GM12878 (cell line): ENCODE measurements at regions of chr6 and their contacts with region 1.

Region 1: GRCh38 chr6:11277275-11278206 is 45.1 kb upstream of the NEDD9 start:
- DNase-seq: peak; percentile 94
- ATAC-seq: peak; percentile 78
- H3K4me3 ChIP-seq: peak overlapping the region; percentile 23; the same call in 1 of the 2 replicates
- H3K27ac ChIP-seq: peak overlapping the region; percentile 95
- H3K4me1 ChIP-seq: peaks cover 46% of the 10 kb centered on the region
- H3K27me3 ChIP-seq: no peaks in the 10 kb centered on the region
- CTCF ChIP-seq: no peak
- EP300 ChIP-seq: peak; percentile 65 to 83; a peak in 2 of 4 replicates
- POLR2A ChIP-seq: peak; percentile 55
- RAD21 ChIP-seq: peak; percentile 12; the same call in 1 of the 2 replicates

Region 2: DNA sequence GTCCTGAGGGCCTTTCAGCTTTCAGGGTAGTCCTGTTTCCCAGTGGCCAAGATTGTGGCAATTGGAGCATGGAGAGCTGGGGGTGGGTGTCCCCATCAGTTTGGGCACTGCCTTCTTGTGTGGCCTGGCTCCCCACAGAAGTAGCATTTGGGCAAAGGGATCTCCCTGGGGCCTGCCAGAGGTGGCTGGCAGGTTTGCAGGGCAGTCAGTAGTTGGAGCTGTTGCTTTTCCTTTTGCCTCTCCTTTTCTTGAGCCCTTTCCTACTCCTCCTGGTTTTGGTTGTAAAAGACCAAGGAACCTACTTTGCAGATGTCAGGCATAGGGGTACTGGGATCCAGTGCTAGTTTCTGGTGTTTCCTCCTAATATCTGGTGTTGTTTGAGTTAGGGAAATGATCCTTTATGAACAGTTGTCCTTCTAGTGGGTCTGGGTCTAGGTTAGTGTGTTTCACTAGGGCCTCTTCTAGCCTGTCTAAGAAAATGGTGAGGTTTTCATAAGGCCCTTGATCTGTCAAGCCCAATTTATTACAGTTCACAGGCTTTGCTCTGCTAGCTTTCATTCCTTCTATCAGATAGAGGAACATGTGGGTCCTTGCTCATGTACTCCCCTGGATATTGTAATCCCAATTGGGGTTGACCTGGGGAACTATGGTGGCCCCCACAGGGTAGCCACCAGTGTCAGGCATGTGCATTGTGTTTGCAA is 169.0 kb before region 1 on chr6:
- CTCF ChIA-PET with region 1: no interaction called
- POLR2A ChIA-PET with region 1: no interaction called
- RAD21 ChIA-PET with region 1: no interaction called
- SMC1A ChIA-PET with region 1: no interaction called
- in situ Hi-C with region 1: no loop called
- intact Hi-C with region 1: no loop called
- DNase-seq: no peak
- ATAC-seq: 0 out of 3 replicates have a peak, but pooled peaks have one; percentile 22
- H3K4me3 ChIP-seq: no peak overlapping the region
- H3K27ac ChIP-seq: no peak overlapping the region
- H3K4me1 ChIP-seq: no peaks in the 10 kb centered on the region
- H3K27me3 ChIP-seq: no peaks in the 10 kb centered on the region
- CTCF ChIP-seq: 0 out of 6 replicates have a peak, but pooled peaks of 1 of the 3 experiments have one; percentile 1
- EP300 ChIP-seq: no peak
- POLR2A ChIP-seq: no peak
- RAD21 ChIP-seq: no peak

Region 3: DNA sequence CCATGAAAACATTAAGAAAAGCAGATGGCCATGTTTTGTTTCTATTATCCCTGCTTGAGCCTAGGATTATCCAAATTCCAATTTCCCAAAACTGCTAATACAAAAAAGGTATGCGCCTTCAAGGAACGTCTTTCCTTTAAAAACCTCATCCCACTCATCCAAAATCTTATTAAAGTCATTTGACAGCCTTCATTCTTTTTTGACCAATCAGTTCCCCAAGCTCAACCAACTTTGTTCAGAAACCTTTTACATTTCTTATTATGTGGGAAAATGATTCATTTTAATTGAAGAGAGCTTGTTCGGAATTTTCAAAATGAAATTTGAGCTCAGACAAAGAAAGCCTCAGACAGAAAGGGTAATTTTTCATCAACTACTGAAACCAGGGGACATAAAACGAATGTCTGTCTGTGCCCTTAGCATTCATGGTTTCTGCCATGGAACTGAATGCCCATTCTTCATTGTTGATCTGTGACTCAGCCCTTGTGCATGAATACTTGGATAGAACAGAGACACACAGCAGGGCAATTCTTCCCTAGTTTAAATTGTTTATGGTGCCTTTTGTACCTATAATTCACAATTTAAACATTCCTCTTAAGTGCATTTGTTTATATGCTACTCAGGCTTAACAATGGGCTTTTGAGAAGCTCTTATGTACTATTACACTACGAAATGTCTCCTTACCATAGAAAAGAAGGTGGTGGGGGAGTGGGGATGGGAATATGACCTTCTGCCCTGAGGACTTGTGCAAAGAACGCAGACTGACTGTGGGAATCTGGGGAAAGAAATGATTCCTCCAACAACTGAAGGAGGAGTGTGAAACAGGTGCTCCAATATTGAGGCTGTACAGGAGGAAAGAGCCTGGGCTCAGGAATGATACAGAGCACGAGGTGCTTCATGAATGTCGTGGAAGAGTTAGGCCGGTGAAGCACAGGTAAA is 116.2 kb before region 1 on chr6:
- CTCF ChIA-PET with region 1: no interaction called
- POLR2A ChIA-PET with region 1: no interaction called
- RAD21 ChIA-PET with region 1: no interaction called
- SMC1A ChIA-PET with region 1: no interaction called
- in situ Hi-C with region 1: no loop called
- intact Hi-C with region 1: no loop called
- DNase-seq: no peak
- ATAC-seq: no peak
- H3K4me3 ChIP-seq: no peak overlapping the region
- H3K27ac ChIP-seq: no peak overlapping the region
- H3K4me1 ChIP-seq: peaks cover 6% of the 10 kb centered on the region; the same call in 1 of the 2 replicates
- H3K27me3 ChIP-seq: no peaks in the 10 kb centered on the region
- CTCF ChIP-seq: no peak
- EP300 ChIP-seq: no peak
- POLR2A ChIP-seq: no peak
- RAD21 ChIP-seq: no peak

Region 4: DNA sequence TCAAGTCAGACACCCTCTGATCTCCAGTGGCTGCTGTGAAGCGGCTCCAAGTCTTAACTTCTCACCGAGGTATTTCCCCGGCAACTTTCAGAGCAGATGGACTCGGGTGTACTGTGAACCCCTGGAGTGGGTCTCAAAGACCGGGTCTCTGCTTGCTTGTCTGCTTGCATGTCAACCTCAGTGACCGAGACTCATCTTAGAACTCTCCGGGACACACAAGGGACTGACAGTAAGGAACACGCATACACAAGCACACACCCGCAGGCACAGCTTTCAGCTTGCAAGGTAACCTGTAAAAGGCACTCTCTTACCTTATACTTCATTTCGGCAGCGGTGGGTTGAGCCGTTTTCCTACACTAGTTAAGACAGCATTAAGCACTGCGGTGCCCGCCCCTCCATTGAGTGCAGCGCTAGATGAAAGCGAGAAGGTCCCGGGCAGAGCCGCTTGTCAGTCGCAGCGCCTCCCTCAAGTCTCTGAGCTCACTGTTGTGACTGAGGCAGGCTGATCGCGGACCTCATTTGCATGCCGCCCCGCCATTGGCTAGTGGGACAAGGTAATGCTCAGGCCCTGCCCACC is 45.3 kb before region 1 on chr6 and contains the start of gene NEDD9:
- CTCF ChIA-PET with region 1: interaction called, 10 read pairs
- POLR2A ChIA-PET with region 1: interaction called, 67 read pairs
- RAD21 ChIA-PET with region 1: interaction called, 62 read pairs
- SMC1A ChIA-PET with region 1: interaction called, 99 read pairs
- in situ Hi-C with region 1: no loop called
- intact Hi-C with region 1: loop called (anchors 1 kb)
- DNase-seq: peak; percentile 86
- ATAC-seq: peak; percentile 98
- H3K4me3 ChIP-seq: peak within 1 kb of the TSS; percentile 84
- H3K27ac ChIP-seq: peak within 1 kb of the TSS; percentile 66
- H3K4me1 ChIP-seq: peaks cover 10% of the 10 kb centered on the region; the same call in 1 of the 2 replicates
- H3K27me3 ChIP-seq: no peaks in the 10 kb centered on the region
- CTCF ChIP-seq: no peak
- EP300 ChIP-seq: no peak
- POLR2A ChIP-seq: peak; percentile 96
- RAD21 ChIP-seq: no peak
- polyA plus RNA-seq, gene NEDD9: 4.9 to 6.3 TPM

Region 5: DNA sequence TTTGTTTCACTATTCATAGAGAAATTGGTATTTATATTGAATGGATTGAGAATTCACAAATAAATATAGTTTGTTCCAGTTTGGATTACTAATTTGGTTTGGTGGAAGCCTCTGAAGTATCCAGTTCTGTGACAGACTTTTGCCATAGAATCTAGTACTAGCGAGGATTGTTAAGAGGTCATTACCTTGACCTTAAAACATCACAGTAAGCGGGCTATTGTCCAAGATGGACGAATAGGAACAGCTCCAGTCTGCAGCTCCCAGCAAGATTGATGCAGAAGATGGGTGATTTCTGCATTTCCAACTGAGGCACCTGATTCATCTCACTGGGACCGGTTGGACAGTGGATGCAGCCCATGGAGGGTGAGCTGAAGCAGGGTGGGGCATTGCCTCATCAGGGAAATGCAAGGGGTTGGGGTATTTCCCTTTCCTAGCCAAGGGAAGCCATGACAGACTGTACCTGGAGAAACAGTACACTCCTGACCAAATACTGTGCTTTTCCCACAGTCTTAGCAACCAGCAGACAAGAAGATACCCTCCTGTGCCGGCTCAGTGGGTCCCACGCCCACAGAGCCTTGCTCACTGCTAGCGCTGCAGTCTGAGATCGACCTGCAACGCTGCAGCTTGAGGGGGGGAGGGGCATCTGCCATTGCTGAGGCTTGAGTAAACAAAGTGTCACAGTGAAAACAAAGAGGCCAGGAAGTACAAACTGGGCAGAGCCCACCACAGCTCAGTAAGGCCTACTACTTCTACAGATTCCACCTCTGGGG is 21.3 kb after region 1 on chr6:
- CTCF ChIA-PET with region 1: interaction called, 5 read pairs
- POLR2A ChIA-PET with region 1: interaction called, 3 read pairs
- RAD21 ChIA-PET with region 1: interaction called, 57 read pairs
- SMC1A ChIA-PET with region 1: interaction called, 86 read pairs
- in situ Hi-C with region 1: no loop called
- intact Hi-C with region 1: no loop called
- DNase-seq: no peak
- ATAC-seq: no peak
- H3K4me3 ChIP-seq: no peak overlapping the region
- H3K27ac ChIP-seq: no peak overlapping the region
- H3K4me1 ChIP-seq: no peaks in the 10 kb centered on the region
- H3K27me3 ChIP-seq: no peaks in the 10 kb centered on the region
- CTCF ChIP-seq: no peak
- EP300 ChIP-seq: no peak
- POLR2A ChIP-seq: no peak
- RAD21 ChIP-seq: no peak

Region 6: DNA sequence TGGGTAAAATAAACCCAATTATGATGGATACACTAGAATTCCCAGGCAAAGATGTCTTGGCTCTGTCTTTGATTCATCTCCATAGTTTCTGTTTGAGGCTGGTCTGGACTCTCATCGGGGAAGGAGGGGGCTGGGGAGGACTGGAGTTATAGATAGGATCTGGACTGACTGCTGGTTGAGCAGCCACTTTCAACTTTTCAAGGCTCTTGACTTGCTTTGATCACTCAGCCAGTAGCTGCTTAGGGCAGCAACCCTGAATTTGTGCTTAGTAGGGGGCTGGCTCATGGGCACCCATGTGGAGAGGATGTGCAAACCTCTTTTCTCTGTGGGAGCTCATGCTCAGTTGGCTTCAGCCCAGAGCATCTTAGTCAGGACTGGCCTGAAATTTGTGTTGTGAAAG is 69.0 kb after region 1 on chr6:
- CTCF ChIA-PET with region 1: interaction called, 4 read pairs
- POLR2A ChIA-PET with region 1: interaction called, 4 read pairs
- RAD21 ChIA-PET with region 1: interaction called, 22 read pairs
- SMC1A ChIA-PET with region 1: interaction called, 26 read pairs
- in situ Hi-C with region 1: no loop called
- intact Hi-C with region 1: loop called (anchors 2 kb)
- DNase-seq: peak; percentile 71
- ATAC-seq: peak; percentile 87
- H3K4me3 ChIP-seq: no peak overlapping the region
- H3K27ac ChIP-seq: peak overlapping the region; percentile 65
- H3K4me1 ChIP-seq: peaks cover 39% of the 10 kb centered on the region
- H3K27me3 ChIP-seq: no peaks in the 10 kb centered on the region
- CTCF ChIP-seq: no peak
- EP300 ChIP-seq: peak in 1 of 2 experiments; percentile 22; a peak in 1 of 4 replicates
- POLR2A ChIP-seq: no peak
- RAD21 ChIP-seq: no peak

Region 7: GRCh38 chr6:11428895-11429294 is 151.4 kb after region 1 on chr6:
- CTCF ChIA-PET with region 1: no interaction called
- POLR2A ChIA-PET with region 1: no interaction called
- RAD21 ChIA-PET with region 1: interaction called, 12 read pairs
- SMC1A ChIA-PET with region 1: interaction called, 8 read pairs
- in situ Hi-C with region 1: no loop called
- intact Hi-C with region 1: no loop called
- DNase-seq: peak; percentile 83
- ATAC-seq: peak; percentile 81
- H3K4me3 ChIP-seq: no peak overlapping the region
- H3K27ac ChIP-seq: peak overlapping the region; percentile 51; the same call in 1 of the 2 replicates
- H3K4me1 ChIP-seq: peaks cover 33% of the 10 kb centered on the region
- H3K27me3 ChIP-seq: no peaks in the 10 kb centered on the region
- CTCF ChIP-seq: no peak
- EP300 ChIP-seq: peak in 1 of 2 experiments; percentile 65; a peak in 2 of 4 replicates
- POLR2A ChIP-seq: no peak
- RAD21 ChIP-seq: no peak